ENCODE measurements at regions of chr5 and their contacts with region 1.

Region 1: DNA sequence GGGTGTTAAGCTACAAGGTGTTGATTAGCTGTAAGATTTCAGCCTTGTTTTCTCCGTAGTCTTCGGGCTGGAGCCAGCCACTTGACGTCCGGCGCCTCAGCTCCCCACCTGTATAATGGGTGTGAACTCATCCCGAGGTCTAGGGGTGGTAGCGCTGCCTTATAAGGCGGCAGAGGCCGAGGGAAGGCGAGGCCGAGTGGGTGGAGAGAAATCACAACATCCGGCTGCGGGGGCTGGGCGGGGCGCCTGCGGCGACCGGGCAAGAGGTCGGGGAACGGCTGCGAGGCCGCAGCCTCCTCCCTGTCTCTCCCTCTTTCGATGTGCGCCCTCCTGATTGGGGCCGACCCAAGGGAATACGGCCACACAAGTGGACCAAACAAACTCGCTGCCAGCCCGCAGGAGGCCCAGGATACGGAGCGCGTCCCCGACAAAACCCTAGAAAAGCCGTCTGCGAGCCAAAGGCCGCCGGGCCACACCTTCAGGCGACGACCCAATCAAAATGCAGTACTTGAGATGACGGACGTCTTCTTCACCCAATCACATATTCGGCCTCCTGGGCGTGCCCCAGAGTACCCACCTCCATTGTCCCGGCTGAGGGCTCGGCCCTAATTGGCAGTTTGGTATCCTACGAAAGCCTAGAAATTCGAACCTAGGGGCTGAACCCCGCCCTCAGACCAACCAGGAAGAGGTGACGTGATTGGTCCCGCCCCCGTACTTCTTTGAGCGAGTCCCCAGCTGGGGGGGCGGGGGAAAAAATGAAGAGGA is 493 bp upstream of the GRK6 start:
- DNase-seq: peak; percentile 99 to 100 (median 100)
- H3K4me3 ChIP-seq: peak overlapping the region; percentile 21 to 53
- H3K4me3 Mint-ChIP-seq: peak overlapping the region; percentile 89 to 96 (median 92)
- H3K27ac ChIP-seq: peak overlapping the region; percentile 65
- H3K27ac Mint-ChIP-seq: peak overlapping the region; percentile 91 to 99 (median 99)
- H3K4me1 ChIP-seq: peaks cover 52% of the 10 kb centered on the region
- H3K4me1 Mint-ChIP-seq: peaks cover 31 to 65% (median 44%) of the 10 kb centered on the region in 4 donors
- H3K27me3 ChIP-seq: no peaks in the 10 kb centered on the region
- H3K27me3 Mint-ChIP-seq: no peaks in the 10 kb centered on the region

Region 2: GRCh38 chr5:177446200-177447065 is 20.4 kb after region 1 on chr5 and contains the start of gene PRR7:
- CTCF ChIA-PET with region 1: interaction called, 110 read pairs
- POLR2A ChIA-PET with region 1: interaction called, 1,171 read pairs
- intact Hi-C with region 1: loop called (anchors 1 kb)
- DNase-seq: peak; percentile 77 to 85 (median 82)
- H3K4me3 ChIP-seq: peak within 1 kb of the TSS in 1 of 2 donors; percentile 50
- H3K4me3 Mint-ChIP-seq: peak within 1 kb of the TSS; percentile 81 to 90 (median 85)
- H3K27ac ChIP-seq: peak within 1 kb of the TSS; percentile 94
- H3K27ac Mint-ChIP-seq: peak within 1 kb of the TSS; percentile 95 to 99 (median 97)
- H3K4me1 ChIP-seq: peaks cover 51% of the 10 kb centered on the region
- H3K4me1 Mint-ChIP-seq: peaks cover 25 to 53% (median 41%) of the 10 kb centered on the region in 4 donors
- H3K27me3 ChIP-seq: no peaks in the 10 kb centered on the region
- H3K27me3 Mint-ChIP-seq: no peaks in the 10 kb centered on the region
- total RNA-seq, gene PRR7: 5.2 to 7.2 TPM